Right cardiac atrium (tissue), 5 donors: ENCODE measurements at regions of chr2 and their contacts with region 1.

Region 1: GRCh38 chr2:112481050-112481527 is 867 bp upstream of the TTL start:
- DNase-seq: peak; percentile 83 to 94 (median 91)
- ATAC-seq: peak; percentile 92
- H3K4me3 ChIP-seq: peak overlapping the region; percentile 82
- H3K27ac ChIP-seq: peak overlapping the region; percentile 37
- H3K4me1 ChIP-seq: peaks cover 9% of the 10 kb centered on the region
- H3K27me3 ChIP-seq: no peaks in the 10 kb centered on the region

Region 2: DNA sequence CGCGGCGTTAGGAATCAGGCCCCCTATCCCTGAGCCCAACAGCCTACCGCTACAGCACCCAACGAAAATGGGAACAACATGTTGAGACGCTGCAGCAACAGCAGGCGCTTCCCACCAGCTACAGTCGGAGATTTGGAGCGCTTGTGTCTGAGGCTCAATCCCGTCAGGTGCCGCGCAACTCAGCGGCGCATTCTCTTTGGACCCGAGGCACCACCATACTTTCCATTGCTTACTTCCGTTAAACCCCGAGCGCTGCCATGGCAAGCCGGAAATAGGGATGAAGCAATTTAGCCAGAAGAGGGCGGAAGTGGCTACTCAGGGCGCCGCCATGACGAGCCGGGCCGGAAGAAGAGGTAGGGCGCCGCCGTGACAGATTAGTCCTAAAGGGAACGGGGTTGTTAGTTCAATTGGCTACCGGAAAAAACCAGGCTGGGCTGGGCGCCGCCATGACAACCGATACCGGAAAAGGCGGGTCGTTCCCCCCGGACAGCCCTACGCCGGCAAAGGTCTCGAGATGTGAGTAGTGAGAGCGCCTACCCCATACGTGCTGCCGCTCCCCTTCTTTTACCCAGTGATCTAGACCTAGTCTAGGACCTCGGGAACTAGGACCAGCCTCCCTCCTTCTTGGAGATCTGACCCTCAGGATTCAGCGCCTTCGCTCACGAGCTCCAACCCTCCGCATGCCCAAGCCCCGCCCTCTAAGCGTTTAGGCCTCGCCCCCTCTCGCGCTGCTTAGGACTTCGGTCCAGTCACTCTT is 103.2 kb after region 1 on chr2 and contains the start of gene CHCHD5:
- intact Hi-C with region 1: loop called in 1 of 4 experiments (anchors 5 kb)
- DNase-seq: peak; percentile 97 to 98 (median 98)
- ATAC-seq: peak; percentile 93 to 95
- H3K4me3 ChIP-seq: peak within 1 kb of the TSS; percentile 85
- H3K27ac ChIP-seq: peak within 1 kb of the TSS; percentile 99
- H3K4me1 ChIP-seq: peaks cover 7% of the 10 kb centered on the region
- H3K27me3 ChIP-seq: no peaks in the 10 kb centered on the region
- total RNA-seq, gene CHCHD5: 26.5 to 31.2 (median 29.6) TPM

Region 3: GRCh38 chr2:112606488-112606902 is 125.4 kb after region 1 on chr2:
- intact Hi-C with region 1: no loop called
- DNase-seq: no peak
- ATAC-seq: no peak
- H3K4me3 ChIP-seq: no peak overlapping the region
- H3K27ac ChIP-seq: no peak overlapping the region
- H3K4me1 ChIP-seq: no peaks in the 10 kb centered on the region
- H3K27me3 ChIP-seq: no peaks in the 10 kb centered on the region

Region 4: GRCh38 chr2:112666764-112667122 is 185.7 kb after region 1 on chr2:
- intact Hi-C with region 1: no loop called
- DNase-seq: no peak
- ATAC-seq: no peak
- H3K4me3 ChIP-seq: no peak overlapping the region
- H3K27ac ChIP-seq: no peak overlapping the region
- H3K4me1 ChIP-seq: no peaks in the 10 kb centered on the region
- H3K27me3 ChIP-seq: no peaks in the 10 kb centered on the region